Caco-2 (cell line): ENCODE measurements at regions of chr15 and their contacts with region 1.

Region 1: GRCh38 chr15:67501177-67501835 is 19.6 kb upstream of the C15orf61 start:
- DNase-seq: no peak
- H3K4me3 ChIP-seq: no peak overlapping the region
- H3K4me3 Mint-ChIP-seq: no peak overlapping the region
- H3K27ac Mint-ChIP-seq: no peak overlapping the region
- H3K4me1 ChIP-seq: no peaks in the 10 kb centered on the region
- H3K4me1 Mint-ChIP-seq: peaks cover 7% of the 10 kb centered on the region
- H3K27me3 ChIP-seq: no peaks in the 10 kb centered on the region
- H3K27me3 Mint-ChIP-seq: no peaks in the 10 kb centered on the region
- CTCF ChIP-seq: peak in 1 of 2 experiments; percentile 45

Region 2: GRCh38 chr15:67479781-67480505 is 21.4 kb before region 1 on chr15:
- CTCF ChIA-PET with region 1: no interaction called
- POLR2A ChIA-PET with region 1: no interaction called
- intact Hi-C with region 1: no loop called
- DNase-seq: no peak
- H3K4me3 ChIP-seq: no peak overlapping the region
- H3K4me3 Mint-ChIP-seq: no peak overlapping the region
- H3K27ac Mint-ChIP-seq: no peak overlapping the region
- H3K4me1 ChIP-seq: no peaks in the 10 kb centered on the region
- H3K4me1 Mint-ChIP-seq: no peaks in the 10 kb centered on the region
- H3K27me3 ChIP-seq: no peaks in the 10 kb centered on the region
- H3K27me3 Mint-ChIP-seq: peaks cover 3% of the 10 kb centered on the region
- CTCF ChIP-seq: no peak

Region 3: GRCh38 chr15:67833710-67834511 is 332.6 kb after region 1 on chr15:
- CTCF ChIA-PET with region 1: interaction called, 8 read pairs
- POLR2A ChIA-PET with region 1: no interaction called
- intact Hi-C with region 1: loop called (anchors 1 kb)
- DNase-seq: peak in 1 of 2 experiments; percentile 62
- H3K4me3 ChIP-seq: peak overlapping the region; percentile 32
- H3K4me3 Mint-ChIP-seq: peak overlapping the region; percentile 71
- H3K27ac Mint-ChIP-seq: no peak overlapping the region
- H3K4me1 ChIP-seq: no peaks in the 10 kb centered on the region
- H3K4me1 Mint-ChIP-seq: no peaks in the 10 kb centered on the region
- H3K27me3 ChIP-seq: no peaks in the 10 kb centered on the region
- H3K27me3 Mint-ChIP-seq: no peaks in the 10 kb centered on the region
- CTCF ChIP-seq: peak; percentile 60 to 72